Naive thymus-derived CD4-positive, alpha-beta T cell (primary cell): ENCODE measurements at regions of chr14 and their contacts with region 1.

Region 1: DNA sequence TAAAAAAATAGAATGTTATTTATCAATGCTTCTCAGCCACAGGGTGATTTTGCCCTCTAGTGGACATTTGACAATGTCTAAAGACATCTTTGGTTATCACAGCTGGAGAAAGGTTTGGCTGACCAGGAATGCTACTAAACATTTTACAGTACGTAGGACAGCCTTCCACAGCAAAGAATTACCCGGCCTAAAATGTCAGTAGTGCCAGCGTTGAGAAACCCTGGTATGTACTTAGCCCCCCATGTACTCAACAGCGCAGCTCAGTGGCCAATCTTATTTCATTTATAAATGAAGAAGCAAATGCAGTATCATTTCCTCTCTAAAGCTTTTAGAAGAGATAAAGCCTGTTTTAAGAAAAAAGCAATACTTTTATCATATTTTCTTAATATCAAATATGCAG is 5.8 kb downstream of the MARK3 start:
- DNase-seq: peak in 7 of 9 donors; percentile 31 to 60 (median 48)
- ATAC-seq: peak; percentile 86
- H3K4me3 ChIP-seq: no peak overlapping the region
- H3K4me3 Mint-ChIP-seq: peak overlapping the region in 6 of 10 donors; percentile 17 to 54 (median 44)
- H3K27ac ChIP-seq: no peak overlapping the region
- H3K27ac Mint-ChIP-seq: peak overlapping the region in 6 of 9 donors; percentile 18 to 86 (median 73)
- H3K4me1 ChIP-seq: peaks cover 51% of the 10 kb centered on the region in 2 donors
- H3K4me1 Mint-ChIP-seq: peaks cover 33 to 86% (median 60%) of the 10 kb centered on the region in 7 donors
- H3K27me3 ChIP-seq: no peaks in the 10 kb centered on the region
- H3K27me3 Mint-ChIP-seq: no peaks in the 10 kb centered on the region

Region 2: GRCh38 chr14:103281496-103282231 is 109.4 kb before region 1 on chr14:
- CTCF ChIA-PET with region 1: no interaction called
- POLR2A ChIA-PET with region 1: no interaction called
- intact Hi-C with region 1: no loop called
- DNase-seq: no peak
- ATAC-seq: no peak
- H3K4me3 ChIP-seq: no peak overlapping the region
- H3K4me3 Mint-ChIP-seq: no peak overlapping the region
- H3K27ac ChIP-seq: no peak overlapping the region
- H3K27ac Mint-ChIP-seq: no peak overlapping the region
- H3K4me1 ChIP-seq: no peaks in the 10 kb centered on the region
- H3K4me1 Mint-ChIP-seq: peaks cover 0 to 5% (median 0%) of the 10 kb centered on the region in 7 donors
- H3K27me3 ChIP-seq: peaks cover 3 to 14% of the 10 kb centered on the region in 2 donors
- H3K27me3 Mint-ChIP-seq: peaks cover 65 to 72% (median 67%) of the 10 kb centered on the region in 5 donors

Region 3: GRCh38 chr14:103292426-103293374 is 98.3 kb before region 1 on chr14:
- CTCF ChIA-PET with region 1: interaction called, 3 read pairs
- POLR2A ChIA-PET with region 1: no interaction called
- intact Hi-C with region 1: loop called in 1 of 2 experiments (anchors 1 kb)
- DNase-seq: peak; percentile 34 to 77 (median 56)
- ATAC-seq: peak; percentile 92
- H3K4me3 ChIP-seq: no peak overlapping the region
- H3K4me3 Mint-ChIP-seq: no peak overlapping the region
- H3K27ac ChIP-seq: no peak overlapping the region
- H3K27ac Mint-ChIP-seq: no peak overlapping the region
- H3K4me1 ChIP-seq: no peaks in the 10 kb centered on the region
- H3K4me1 Mint-ChIP-seq: peaks cover 0 to 7% (median 0%) of the 10 kb centered on the region in 7 donors
- H3K27me3 ChIP-seq: no peaks in the 10 kb centered on the region
- H3K27me3 Mint-ChIP-seq: peaks cover 10 to 27% (median 20%) of the 10 kb centered on the region in 5 donors

Region 4: DNA sequence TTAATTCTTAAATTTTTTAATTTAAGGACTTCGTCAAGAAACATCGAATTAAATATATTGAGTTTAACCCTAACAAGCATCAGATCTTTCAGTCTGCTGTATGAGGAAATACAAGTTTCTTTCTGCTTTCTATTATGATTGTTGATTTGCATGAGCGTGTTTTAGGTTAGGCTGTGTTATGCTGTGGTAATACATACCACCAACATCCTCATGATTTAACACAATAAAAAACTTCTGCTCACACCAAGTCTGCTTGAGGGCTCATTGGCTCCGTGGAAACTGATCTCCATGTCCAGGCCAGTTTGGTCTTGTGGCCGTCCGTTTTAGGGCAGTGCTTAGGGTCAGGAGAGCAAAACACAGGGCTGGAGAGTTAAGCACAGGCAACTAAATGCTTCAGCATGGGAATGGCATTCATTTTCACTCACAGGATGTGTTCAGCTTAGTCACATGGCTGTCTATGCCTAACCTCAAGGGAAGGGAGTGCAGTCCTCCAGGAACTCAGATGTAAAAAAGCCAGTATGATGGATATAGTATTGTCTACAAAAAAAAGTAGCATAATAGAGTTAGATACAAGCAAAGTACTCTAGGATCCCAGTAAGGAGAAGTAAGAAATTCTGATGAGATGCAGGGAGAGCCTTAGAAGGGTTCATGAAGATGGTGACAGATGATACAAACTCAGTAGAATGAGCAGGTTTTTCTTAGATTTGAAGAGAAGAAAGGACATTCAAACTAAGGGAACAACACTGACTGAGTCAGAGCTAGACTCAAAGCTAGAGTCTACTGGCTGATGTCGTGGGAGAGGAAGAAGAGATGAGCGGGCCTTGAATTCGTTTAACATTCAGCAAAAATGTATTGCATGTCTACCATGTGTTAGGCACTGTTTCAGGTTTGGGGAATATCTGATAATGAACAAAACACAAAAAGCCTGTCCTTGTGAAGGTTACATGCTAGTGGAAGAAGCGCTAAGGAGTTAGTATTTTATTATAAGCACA is 10.5 kb after region 1 on chr14:
- CTCF ChIA-PET with region 1: interaction called, 15 read pairs
- POLR2A ChIA-PET with region 1: interaction called, 3 read pairs
- intact Hi-C with region 1: loop called in 1 of 2 experiments (anchors 2 kb)
- DNase-seq: peak in 1 of 9 donors; percentile 9
- ATAC-seq: peak; percentile 31
- H3K4me3 ChIP-seq: no peak overlapping the region
- H3K4me3 Mint-ChIP-seq: peak overlapping the region; percentile 12 to 55 (median 41)
- H3K27ac ChIP-seq: no peak overlapping the region
- H3K27ac Mint-ChIP-seq: peak overlapping the region; percentile 13 to 87 (median 38)
- H3K4me1 ChIP-seq: peaks cover 17 to 49% of the 10 kb centered on the region in 2 donors
- H3K4me1 Mint-ChIP-seq: peaks cover 52 to 80% (median 71%) of the 10 kb centered on the region in 7 donors
- H3K27me3 ChIP-seq: no peaks in the 10 kb centered on the region
- H3K27me3 Mint-ChIP-seq: no peaks in the 10 kb centered on the region

Region 5: GRCh38 chr14:103495854-103496253 is 104.8 kb after region 1 on chr14:
- CTCF ChIA-PET with region 1: no interaction called
- POLR2A ChIA-PET with region 1: no interaction called
- intact Hi-C with region 1: no loop called
- DNase-seq: no peak
- ATAC-seq: no peak
- H3K4me3 ChIP-seq: no peak overlapping the region
- H3K4me3 Mint-ChIP-seq: no peak overlapping the region
- H3K27ac ChIP-seq: no peak overlapping the region
- H3K27ac Mint-ChIP-seq: peak overlapping the region in 1 of 9 donors; percentile 44
- H3K4me1 ChIP-seq: no peaks in the 10 kb centered on the region
- H3K4me1 Mint-ChIP-seq: peaks cover 7 to 11% (median 9%) of the 10 kb centered on the region in 7 donors
- H3K27me3 ChIP-seq: no peaks in the 10 kb centered on the region
- H3K27me3 Mint-ChIP-seq: no peaks in the 10 kb centered on the region

Region 6: GRCh38 chr14:103724116-103724515 is 333.1 kb after region 1 on chr14:
- CTCF ChIA-PET with region 1: no interaction called
- POLR2A ChIA-PET with region 1: no interaction called
- intact Hi-C with region 1: no loop called
- DNase-seq: no peak
- ATAC-seq: no peak
- H3K4me3 ChIP-seq: no peak overlapping the region
- H3K4me3 Mint-ChIP-seq: no peak overlapping the region
- H3K27ac ChIP-seq: no peak overlapping the region
- H3K27ac Mint-ChIP-seq: no peak overlapping the region
- H3K4me1 ChIP-seq: peaks cover 0 to 4% of the 10 kb centered on the region in 2 donors
- H3K4me1 Mint-ChIP-seq: peaks cover 10 to 22% (median 15%) of the 10 kb centered on the region in 7 donors
- H3K27me3 ChIP-seq: no peaks in the 10 kb centered on the region
- H3K27me3 Mint-ChIP-seq: no peaks in the 10 kb centered on the region